ENCODE measurements at regions of chr2 and their contacts with region 1.

Region 1: GRCh38 chr2:202911512-202912341 is at the starts of genes CARF and WDR12:
- DNase-seq: peak; percentile 82
- ATAC-seq: peak; percentile 85
- H3K4me3 Mint-ChIP-seq: peak within 1 kb of the TSS; percentile 97
- H3K27ac Mint-ChIP-seq: peak within 1 kb of the TSS; percentile 100
- H3K4me1 Mint-ChIP-seq: peaks cover 29% of the 10 kb centered on the region
- H3K27me3 Mint-ChIP-seq: no peaks in the 10 kb centered on the region
- CTCF ChIP-seq: no peak
- total RNA-seq, gene CARF: 10.6 and 12.0 TPM in 2 replicates
- total RNA-seq, gene WDR12: 57.5 and 63.1 TPM in 2 replicates

Region 2: GRCh38 chr2:202375609-202376408 is 535.9 kb before region 1 on chr2 and contains the start of gene BMPR2:
- CTCF ChIA-PET with region 1: no interaction called
- POLR2A ChIA-PET with region 1: interaction called, 5 read pairs
- intact Hi-C with region 1: loop called (anchors 5 kb)
- DNase-seq: peak; percentile 88
- ATAC-seq: peak; percentile 79
- H3K4me3 Mint-ChIP-seq: peak within 1 kb of the TSS; percentile 98
- H3K27ac Mint-ChIP-seq: peak within 1 kb of the TSS; percentile 87
- H3K4me1 Mint-ChIP-seq: peaks cover 24% of the 10 kb centered on the region
- H3K27me3 Mint-ChIP-seq: no peaks in the 10 kb centered on the region
- CTCF ChIP-seq: no peak
- total RNA-seq, gene BMPR2: 16.5 and 16.8 TPM in 2 replicates

Region 3: GRCh38 chr2:202848813-202849212 is 62.9 kb before region 1 on chr2:
- CTCF ChIA-PET with region 1: no interaction called
- POLR2A ChIA-PET with region 1: interaction called, 4 read pairs
- intact Hi-C with region 1: loop called (anchors 1 kb)
- DNase-seq: no peak
- ATAC-seq: peak; percentile 61
- H3K4me3 Mint-ChIP-seq: peak overlapping the region; percentile 46
- H3K27ac Mint-ChIP-seq: peak overlapping the region; percentile 77
- H3K4me1 Mint-ChIP-seq: peaks cover 23% of the 10 kb centered on the region
- H3K27me3 Mint-ChIP-seq: no peaks in the 10 kb centered on the region
- CTCF ChIP-seq: no peak

Region 4: GRCh38 chr2:202883987-202884675 is 27.6 kb before region 1 on chr2:
- CTCF ChIA-PET with region 1: no interaction called
- POLR2A ChIA-PET with region 1: no interaction called
- intact Hi-C with region 1: loop called (anchors 2 kb)
- DNase-seq: no peak
- ATAC-seq: no peak
- H3K4me3 Mint-ChIP-seq: no peak overlapping the region
- H3K27ac Mint-ChIP-seq: no peak overlapping the region
- H3K4me1 Mint-ChIP-seq: no peaks in the 10 kb centered on the region
- H3K27me3 Mint-ChIP-seq: no peaks in the 10 kb centered on the region
- CTCF ChIP-seq: no peak

Region 5: DNA sequence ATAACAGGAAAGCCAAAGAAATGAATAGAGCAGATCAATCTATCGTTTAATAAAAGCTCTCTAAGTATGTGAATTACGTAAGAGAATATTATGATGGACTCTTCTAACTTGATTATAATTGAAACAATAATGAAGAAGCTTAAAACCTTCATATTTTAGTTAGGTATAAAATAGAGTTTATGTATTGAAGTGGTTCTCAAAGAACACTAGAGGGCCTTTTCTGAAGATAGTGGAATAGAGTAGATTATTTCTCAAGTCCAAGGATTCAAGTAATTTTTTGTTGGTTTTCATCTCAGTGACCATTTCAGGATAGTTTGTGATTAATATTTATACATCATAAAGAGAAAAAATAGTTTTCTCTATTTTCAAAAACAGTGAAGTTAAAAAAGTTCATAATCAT is 200.6 kb after region 1 on chr2:
- CTCF ChIA-PET with region 1: no interaction called
- POLR2A ChIA-PET with region 1: no interaction called
- intact Hi-C with region 1: no loop called
- DNase-seq: no peak
- ATAC-seq: no peak
- H3K4me3 Mint-ChIP-seq: no peak overlapping the region
- H3K27ac Mint-ChIP-seq: no peak overlapping the region
- H3K4me1 Mint-ChIP-seq: no peaks in the 10 kb centered on the region
- H3K27me3 Mint-ChIP-seq: no peaks in the 10 kb centered on the region
- CTCF ChIP-seq: no peak

Region 6: GRCh38 chr2:203225423-203226039 is 313.8 kb after region 1 on chr2:
- CTCF ChIA-PET with region 1: no interaction called
- POLR2A ChIA-PET with region 1: no interaction called
- intact Hi-C with region 1: no loop called
- DNase-seq: no peak
- ATAC-seq: peak; percentile 78
- H3K4me3 Mint-ChIP-seq: no peak overlapping the region
- H3K27ac Mint-ChIP-seq: no peak overlapping the region
- H3K4me1 Mint-ChIP-seq: no peaks in the 10 kb centered on the region
- H3K27me3 Mint-ChIP-seq: no peaks in the 10 kb centered on the region
- CTCF ChIP-seq: peak; percentile 65

Region 7: GRCh38 chr2:203327901-203328759 is 416.4 kb after region 1 on chr2 and contains the start of gene ABI2:
- CTCF ChIA-PET with region 1: no interaction called
- POLR2A ChIA-PET with region 1: no interaction called
- intact Hi-C with region 1: loop called (anchors 10 kb)
- DNase-seq: peak; percentile 65
- ATAC-seq: peak; percentile 67
- H3K4me3 Mint-ChIP-seq: peak within 1 kb of the TSS; percentile 90
- H3K27ac Mint-ChIP-seq: peak within 1 kb of the TSS; percentile 76
- H3K4me1 Mint-ChIP-seq: peaks cover 15% of the 10 kb centered on the region
- H3K27me3 Mint-ChIP-seq: no peaks in the 10 kb centered on the region
- CTCF ChIP-seq: no peak
- total RNA-seq, gene ABI2: 13.8 and 17.3 TPM in 2 replicates

Measured in activated B cell treated with CpG ODN at 0.5 μM for 24 hours (primary cell).